Astrocyte of the cerebellum (primary cell): ENCODE measurements at regions of chr2 and their contacts with region 1.

Region 1: GRCh38 chr2:235979451-235980435 is 188.4 kb downstream of the GBX2 start:
- DNase-seq: no peak
- H3K4me3 ChIP-seq: no peak overlapping the region
- CTCF ChIP-seq: no peak

Region 2: DNA sequence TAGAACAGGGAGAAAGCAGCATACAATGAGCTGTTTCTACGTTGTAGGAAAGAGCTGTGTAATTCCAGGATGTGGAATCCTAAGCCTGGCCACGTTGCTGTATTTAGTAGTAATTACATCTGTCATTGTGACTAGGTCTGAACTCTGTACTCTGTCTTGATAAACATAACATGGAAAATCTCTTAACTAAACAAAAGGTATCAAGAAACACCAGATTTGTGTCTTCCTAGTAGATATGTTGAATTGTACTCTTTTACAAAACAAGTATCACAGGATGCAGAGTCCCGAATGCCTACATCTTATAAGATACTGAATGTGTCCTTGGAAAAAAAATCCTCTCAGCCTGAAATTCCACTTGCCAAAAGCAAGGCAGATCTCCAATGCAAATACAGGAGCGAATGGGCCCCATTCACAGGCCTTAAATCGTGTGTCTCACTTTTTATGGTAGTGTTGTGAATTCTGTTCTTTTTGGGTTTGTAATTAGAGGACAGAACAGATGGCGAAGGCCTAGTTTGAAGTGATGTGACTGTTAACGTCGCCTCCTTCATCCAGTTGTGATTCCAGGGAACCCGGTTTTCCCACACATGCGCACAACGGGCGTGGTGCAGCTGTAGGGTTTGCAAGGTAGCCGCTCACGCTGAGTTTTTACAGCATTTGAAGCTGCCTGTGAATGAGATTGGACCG is 58.1 kb before region 1 on chr2:
- in situ Hi-C with region 1: loop called (anchors 5 kb)
- DNase-seq: no peak
- H3K4me3 ChIP-seq: no peak overlapping the region
- CTCF ChIP-seq: no peak